K562 (cell line): ENCODE measurements at regions of chr16 and their contacts with region 1.

Region 1: GRCh38 chr16:74709441-74709877 is 8.8 kb upstream of the MLKL start:
- DNase-seq: peak; percentile 82 to 85 (median 85)
- ATAC-seq: peak; percentile 95
- H3K4me3 ChIP-seq: no peak overlapping the region
- H3K27ac ChIP-seq: no peak overlapping the region
- H3K4me1 ChIP-seq: peaks cover 0 to 8% of the 10 kb centered on the region in 2 experiments; a peak in 1 of 5 replicates
- H3K27me3 ChIP-seq: peaks cover 9 to 20% of the 10 kb centered on the region in 2 experiments; a peak in 4 of 5 replicates
- CTCF ChIP-seq: peak; percentile 97 to 99 (median 99)
- EP300 ChIP-seq: no peak
- POLR2A ChIP-seq: no peak
- RAD21 ChIP-seq: peak; percentile 87 to 94

Region 2: GRCh38 chr16:74752756-74753155 is 43.3 kb after region 1 on chr16:
- CTCF ChIA-PET with region 1: no interaction called
- POLR2A ChIA-PET with region 1: no interaction called
- in situ Hi-C with region 1: no loop called
- intact Hi-C with region 1: no loop called
- DNase-seq: no peak
- ATAC-seq: no peak
- H3K4me3 ChIP-seq: no peak overlapping the region
- H3K27ac ChIP-seq: no peak overlapping the region
- H3K4me1 ChIP-seq: peaks cover 0 to 17% of the 10 kb centered on the region in 2 experiments; a peak in 2 of 5 replicates
- H3K27me3 ChIP-seq: peaks cover 36 to 63% of the 10 kb centered on the region in 2 experiments
- CTCF ChIP-seq: no peak
- EP300 ChIP-seq: no peak
- POLR2A ChIP-seq: no peak
- RAD21 ChIP-seq: no peak

Region 3: DNA sequence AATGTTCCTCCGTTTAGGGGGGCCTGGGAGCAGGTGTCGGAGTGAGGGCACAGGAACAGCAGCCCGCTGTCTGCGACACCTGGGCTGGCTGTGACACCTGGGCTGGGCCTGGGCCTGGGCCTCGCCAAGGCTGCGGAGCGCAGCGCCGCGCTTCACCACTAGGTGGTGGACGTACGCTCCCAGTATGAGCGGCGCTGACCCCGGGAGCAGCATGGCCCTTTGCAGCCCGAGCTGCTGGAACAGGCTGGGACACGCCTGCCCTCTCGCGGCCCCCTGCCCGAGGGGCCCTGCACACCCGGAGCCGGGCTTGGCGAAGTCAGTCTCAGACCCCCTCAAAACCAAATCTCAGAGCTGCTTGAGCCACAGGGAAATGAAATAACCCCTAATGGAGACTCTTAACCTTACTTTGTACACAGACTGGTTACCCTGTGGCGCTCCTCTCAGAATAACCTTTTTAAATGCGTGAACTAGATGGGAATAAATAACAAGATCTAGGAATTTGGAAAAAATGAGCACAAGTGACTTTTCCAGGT is 103.7 kb after region 1 on chr16:
- CTCF ChIA-PET with region 1: interaction called, 16 read pairs
- POLR2A ChIA-PET with region 1: no interaction called
- in situ Hi-C with region 1: no loop called
- intact Hi-C with region 1: loop called (anchors 1 kb)
- DNase-seq: peak; percentile 83 to 88 (median 86)
- ATAC-seq: peak; percentile 100
- H3K4me3 ChIP-seq: no peak overlapping the region
- H3K27ac ChIP-seq: no peak overlapping the region
- H3K4me1 ChIP-seq: peaks cover 0 to 6% of the 10 kb centered on the region in 2 experiments; a peak in 2 of 5 replicates
- H3K27me3 ChIP-seq: peaks cover 5 to 35% of the 10 kb centered on the region in 2 experiments; a peak in 4 of 5 replicates
- CTCF ChIP-seq: peak; percentile 96 to 99 (median 97)
- EP300 ChIP-seq: no peak
- POLR2A ChIP-seq: no peak
- RAD21 ChIP-seq: peak; percentile 88 to 97

Region 4: GRCh38 chr16:74862741-74863244 is 153.3 kb after region 1 on chr16:
- CTCF ChIA-PET with region 1: interaction called, 24 read pairs
- POLR2A ChIA-PET with region 1: no interaction called
- in situ Hi-C with region 1: no loop called
- intact Hi-C with region 1: loop called (anchors 1 kb)
- DNase-seq: peak; percentile 64 to 73 (median 71)
- ATAC-seq: peak; percentile 89
- H3K4me3 ChIP-seq: no peak overlapping the region
- H3K27ac ChIP-seq: no peak overlapping the region
- H3K4me1 ChIP-seq: no peaks in the 10 kb centered on the region
- H3K27me3 ChIP-seq: peaks cover 4 to 9% of the 10 kb centered on the region in 2 experiments; a peak in 4 of 5 replicates
- CTCF ChIP-seq: peak; percentile 69 to 96 (median 77)
- EP300 ChIP-seq: no peak
- POLR2A ChIP-seq: no peak
- RAD21 ChIP-seq: peak; percentile 89 to 93

Region 5: DNA sequence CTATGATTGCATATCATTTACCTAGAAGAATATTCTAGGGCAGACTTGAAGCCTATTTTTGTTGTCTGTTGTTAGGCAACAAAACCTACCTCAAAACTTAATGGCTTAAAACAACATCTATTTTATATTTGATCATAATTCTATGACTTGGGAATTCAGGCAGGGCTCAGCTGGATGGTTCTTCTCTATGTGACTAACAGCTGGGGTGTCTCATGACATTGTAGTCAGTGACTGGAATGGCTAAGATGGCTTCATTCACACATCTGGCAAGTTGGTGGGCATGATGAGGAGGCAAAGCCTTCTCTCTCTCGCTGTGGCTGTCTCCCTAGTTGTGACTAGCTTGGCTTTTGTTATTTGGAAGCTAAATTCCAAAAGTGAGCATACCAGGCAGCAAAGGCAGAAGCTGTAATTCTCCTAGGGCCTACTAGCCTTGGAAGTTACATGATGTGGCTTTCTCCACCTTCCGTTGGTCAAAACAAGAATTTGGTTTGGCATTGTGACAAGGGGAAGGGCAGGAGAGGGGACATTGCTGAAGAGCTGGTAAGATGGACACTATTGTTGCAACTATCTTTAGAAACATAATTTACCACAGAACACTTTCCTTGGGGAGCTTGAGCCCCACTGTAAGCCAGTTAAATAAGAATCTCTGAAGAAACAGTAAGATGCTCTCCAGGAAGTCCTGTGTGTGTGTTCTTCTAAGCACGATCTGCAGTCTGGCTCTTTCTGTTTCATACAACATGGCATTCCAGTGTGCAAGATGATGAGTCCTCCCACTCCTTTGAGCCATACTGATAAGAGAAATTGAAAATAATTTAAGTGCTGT is 328.8 kb after region 1 on chr16:
- CTCF ChIA-PET with region 1: no interaction called
- POLR2A ChIA-PET with region 1: no interaction called
- in situ Hi-C with region 1: no loop called
- intact Hi-C with region 1: no loop called
- DNase-seq: peak; percentile 22 to 51 (median 34)
- ATAC-seq: peak; percentile 44
- H3K4me3 ChIP-seq: no peak overlapping the region
- H3K27ac ChIP-seq: peak overlapping the region; percentile 65
- H3K4me1 ChIP-seq: peaks cover 9 to 39% of the 10 kb centered on the region in 2 experiments; a peak in 4 of 5 replicates
- H3K27me3 ChIP-seq: no peaks in the 10 kb centered on the region
- CTCF ChIP-seq: no peak
- EP300 ChIP-seq: no peak
- POLR2A ChIP-seq: no peak
- RAD21 ChIP-seq: no peak

Region 6: GRCh38 chr16:75130150-75130771 is 420.8 kb after region 1 on chr16:
- CTCF ChIA-PET with region 1: no interaction called
- POLR2A ChIA-PET with region 1: no interaction called
- in situ Hi-C with region 1: loop called (anchors 25 kb)
- intact Hi-C with region 1: loop called (anchors 10 kb)
- DNase-seq: peak in 1 of 4 experiments; percentile 58
- ATAC-seq: peak; percentile 89
- H3K4me3 ChIP-seq: no peak overlapping the region
- H3K27ac ChIP-seq: no peak overlapping the region
- H3K4me1 ChIP-seq: peaks cover 4 to 7% of the 10 kb centered on the region in 2 experiments; a peak in 4 of 5 replicates
- H3K27me3 ChIP-seq: no peaks in the 10 kb centered on the region; a peak in 1 of 5 replicates
- CTCF ChIP-seq: peak; percentile 44 to 63 (median 45); a peak in 5 of 6 replicates
- EP300 ChIP-seq: no peak; the same call in 1 of the 2 replicates
- POLR2A ChIP-seq: no peak
- RAD21 ChIP-seq: peak; percentile 44 to 78; a peak in 3 of 4 replicates

Region 7: DNA sequence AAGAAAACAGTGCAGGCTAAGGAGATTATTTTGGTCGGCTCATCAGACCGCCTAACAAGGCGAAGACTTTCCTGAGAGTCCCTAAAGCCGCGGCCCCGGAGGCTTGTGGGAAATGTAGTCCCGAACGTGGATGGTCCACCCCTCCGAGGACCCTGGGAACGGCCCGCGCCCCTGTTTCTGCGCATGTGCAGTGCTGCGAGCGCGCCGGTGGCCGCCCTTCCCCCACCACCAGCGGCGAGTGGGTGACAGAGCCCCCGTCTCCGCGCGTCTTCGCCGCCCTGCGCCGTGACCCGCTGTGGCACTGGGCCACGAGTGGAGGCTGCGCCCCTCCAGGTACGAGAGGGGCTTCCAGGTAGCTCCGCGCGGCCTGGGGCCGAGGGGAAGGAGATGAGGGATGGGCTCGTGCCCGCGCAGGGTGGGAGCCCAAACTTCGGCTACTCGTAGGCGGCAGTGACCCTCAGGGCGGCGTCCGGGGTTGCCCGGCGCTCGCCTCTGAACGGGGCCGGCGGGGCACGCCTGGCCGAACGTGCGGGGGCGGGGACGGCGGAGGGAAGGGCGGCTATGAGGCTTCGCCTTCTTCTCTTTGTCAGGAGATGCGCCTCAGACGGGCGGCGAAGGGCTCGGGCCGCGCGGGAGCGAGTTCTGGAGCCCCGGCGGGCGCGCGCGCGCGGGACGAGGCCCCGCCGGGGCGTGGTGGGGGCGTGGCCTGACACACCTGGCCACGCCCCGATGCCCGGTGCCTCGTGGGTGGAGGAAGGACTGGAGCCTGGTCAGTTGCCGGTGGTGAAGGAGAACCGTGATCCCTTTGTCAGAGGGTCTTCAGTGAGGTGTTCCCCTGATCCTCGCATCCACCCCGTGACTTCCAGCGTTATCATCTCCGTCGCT is 439.1 kb after region 1 on chr16 and contains the start of gene ZFP1:
- CTCF ChIA-PET with region 1: no interaction called
- POLR2A ChIA-PET with region 1: no interaction called
- in situ Hi-C with region 1: loop called (anchors 25 kb)
- intact Hi-C with region 1: no loop called
- DNase-seq: peak; percentile 94 to 97 (median 95)
- ATAC-seq: peak; percentile 94
- H3K4me3 ChIP-seq: peak within 1 kb of the TSS; percentile 97
- H3K27ac ChIP-seq: peak within 1 kb of the TSS; percentile 97
- H3K4me1 ChIP-seq: peaks cover 0 to 14% of the 10 kb centered on the region in 2 experiments; a peak in 3 of 5 replicates
- H3K27me3 ChIP-seq: no peaks in the 10 kb centered on the region
- CTCF ChIP-seq: no peak
- EP300 ChIP-seq: no peak
- POLR2A ChIP-seq: peak; percentile 83
- RAD21 ChIP-seq: no peak
- polyA plus RNA-seq, gene ZFP1: 2.6 to 4.1 TPM